Head of caudate nucleus (tissue), 42 donors: ENCODE measurements at regions of chr13 and their contacts with region 1.

Region 1: DNA sequence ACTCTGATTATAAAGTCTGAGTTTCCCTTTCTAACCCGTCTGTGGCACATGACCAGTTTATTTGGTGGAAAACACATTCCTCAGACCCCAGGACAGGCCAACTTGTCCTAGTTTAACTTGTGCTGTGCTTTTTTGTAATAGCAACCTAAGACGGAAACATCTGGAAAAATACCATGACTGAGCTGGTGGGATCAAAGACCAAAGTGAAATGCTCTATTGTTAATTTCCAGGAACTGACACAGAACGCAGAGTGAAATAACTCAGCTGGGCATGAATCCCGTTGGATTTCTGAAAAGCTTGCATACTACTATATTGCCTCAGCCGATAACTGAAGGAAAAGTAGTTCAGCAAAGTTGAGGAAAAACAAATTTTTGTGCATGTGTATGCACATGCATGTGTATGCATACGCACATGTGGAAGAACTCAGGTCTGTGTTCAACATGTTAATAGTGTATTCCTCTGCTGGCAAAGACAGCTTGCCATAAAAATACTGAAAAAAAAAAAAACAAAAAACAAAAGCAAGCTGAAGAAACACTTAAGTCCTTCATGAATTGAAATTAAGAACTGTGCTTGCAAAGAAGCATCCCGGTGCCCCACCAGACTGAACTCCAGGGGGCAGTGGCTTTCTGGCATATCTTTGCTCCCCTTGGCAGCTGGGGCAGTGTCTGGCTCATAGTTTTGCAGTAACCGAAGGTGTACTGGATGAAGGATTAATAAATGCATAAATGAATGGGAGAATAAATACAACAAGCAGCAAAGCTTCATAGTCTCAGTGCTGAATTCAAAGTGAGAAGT is 187.8 kb downstream of the LHFPL6 start:
- DNase-seq: peak in 41 of 42 donors; percentile 11 to 83 (median 56)

Region 2: DNA sequence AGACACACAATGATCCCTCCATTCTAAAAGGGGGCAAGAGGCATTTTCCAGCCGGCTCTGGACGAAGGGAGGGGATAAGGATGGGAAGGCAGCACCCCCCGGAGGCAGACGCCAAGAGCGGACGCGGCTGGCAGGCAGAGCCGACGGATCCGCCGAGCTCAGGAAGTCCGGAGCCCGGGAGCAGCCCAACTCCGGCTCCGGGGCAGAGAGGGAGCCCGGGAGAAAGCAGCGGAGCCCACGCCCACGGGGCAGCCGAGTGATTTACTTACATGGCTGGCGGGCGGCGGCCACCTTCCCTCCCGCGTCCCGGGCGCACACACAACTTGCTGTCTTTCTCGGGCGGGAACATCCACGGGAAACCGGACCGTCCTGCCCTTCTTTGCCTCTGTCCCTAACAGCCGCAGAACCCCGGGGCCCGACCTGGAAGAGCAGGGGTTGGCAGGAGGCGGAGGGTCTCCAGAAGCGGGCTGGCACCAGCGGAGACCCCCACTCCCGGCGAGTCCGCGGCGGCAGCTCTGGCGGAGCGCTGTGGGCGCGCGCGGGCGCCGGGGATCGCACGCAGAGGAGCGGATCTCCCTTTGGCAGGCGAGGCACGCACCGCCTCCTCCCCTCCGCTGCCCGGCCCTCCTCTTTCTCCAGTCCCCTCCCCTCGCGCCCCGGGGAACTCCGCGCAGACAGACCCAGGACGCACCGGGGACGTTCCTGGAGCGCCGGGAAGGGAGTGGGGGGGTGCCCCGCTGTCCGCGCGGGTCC is 187.6 kb after region 1 on chr13 and contains the start of gene LHFPL6:
- intact Hi-C with region 1: loop called (anchors 5 kb)
- DNase-seq: peak; percentile 40 to 88 (median 76)